H1 (cell line): ENCODE measurements at regions of chr11 and their contacts with region 1.

Region 1: DNA sequence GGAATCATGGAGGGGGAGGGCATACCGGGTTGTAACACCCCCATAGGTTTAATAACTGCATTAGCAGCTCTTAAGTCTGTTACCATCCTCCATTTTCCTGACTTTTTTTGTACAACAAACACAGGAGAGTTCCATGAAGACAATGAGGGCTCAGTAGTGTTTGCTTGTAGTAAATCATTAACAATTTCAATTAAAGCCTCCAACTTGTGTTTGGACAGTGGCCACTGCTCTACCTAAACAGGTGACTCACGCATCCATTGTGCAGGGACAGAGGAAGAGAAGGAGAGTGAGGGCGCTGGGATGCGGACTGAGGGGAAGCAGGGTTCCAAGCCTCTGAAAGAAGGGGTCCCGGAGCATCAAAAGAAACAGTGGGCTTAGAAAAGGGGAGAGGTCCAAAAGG is 21.3 kb upstream of the MTNR1B start:
- DNase-seq: no peak
- H3K4me3 ChIP-seq: no peak overlapping the region
- H3K27ac ChIP-seq: no peak overlapping the region
- H3K4me1 ChIP-seq: no peaks in the 10 kb centered on the region
- H3K27me3 ChIP-seq: no peaks in the 10 kb centered on the region
- CTCF ChIP-seq: no peak
- EP300 ChIP-seq: no peak
- POLR2A ChIP-seq: no peak
- RAD21 ChIP-seq: no peak

Region 2: GRCh38 chr11:92753151-92753550 is 195.0 kb before region 1 on chr11:
- CTCF ChIA-PET with region 1: no interaction called
- POLR2A ChIA-PET with region 1: no interaction called
- DNase-seq: no peak
- H3K4me3 ChIP-seq: no peak overlapping the region
- H3K27ac ChIP-seq: no peak overlapping the region
- H3K4me1 ChIP-seq: no peaks in the 10 kb centered on the region
- H3K27me3 ChIP-seq: no peaks in the 10 kb centered on the region
- CTCF ChIP-seq: no peak
- EP300 ChIP-seq: no peak
- POLR2A ChIP-seq: no peak
- RAD21 ChIP-seq: no peak

Region 3: GRCh38 chr11:92969634-92970347 is 21.7 kb after region 1 on chr11 and contains the start of gene MTNR1B:
- CTCF ChIA-PET with region 1: interaction called, 39 read pairs
- POLR2A ChIA-PET with region 1: no interaction called
- DNase-seq: peak in 1 of 2 experiments; percentile 62
- H3K4me3 ChIP-seq: peak within 1 kb of the TSS; percentile 35 to 72 (median 63)
- H3K27ac ChIP-seq: no peak within 1 kb of the TSS
- H3K4me1 ChIP-seq: peaks cover 0 to 2% (median 0%) of the 10 kb centered on the region in 4 experiments; a peak in 2 of 7 replicates
- H3K27me3 ChIP-seq: peaks cover 12 to 25% (median 18%) of the 10 kb centered on the region in 4 experiments
- CTCF ChIP-seq: no peak
- EP300 ChIP-seq: no peak
- POLR2A ChIP-seq: peak in 1 of 2 experiments; percentile 38; a peak in 1 of 3 replicates
- RAD21 ChIP-seq: no peak
- total RNA-seq, gene MTNR1B: not detected in 2 replicates

Region 4: DNA sequence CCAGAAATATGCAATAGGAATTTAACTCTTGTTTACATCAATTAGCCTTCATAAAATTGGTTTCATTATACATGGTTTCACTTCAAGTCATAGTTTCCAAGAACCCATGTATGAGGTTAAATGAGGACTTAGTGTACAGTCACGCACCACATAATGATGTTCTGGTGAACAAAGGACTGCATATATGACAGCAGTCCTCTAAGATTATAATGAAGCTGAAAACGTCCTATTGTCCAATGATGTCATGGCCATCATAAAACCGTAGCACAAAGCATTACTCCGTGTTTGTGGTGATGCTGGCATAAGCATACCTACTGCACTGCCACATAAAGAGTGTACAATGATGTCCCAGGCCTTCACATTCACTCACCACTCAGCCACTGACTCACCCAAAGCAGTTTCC is 564.0 kb after region 1 on chr11:
- CTCF ChIA-PET with region 1: no interaction called
- POLR2A ChIA-PET with region 1: no interaction called
- DNase-seq: no peak
- H3K4me3 ChIP-seq: no peak overlapping the region
- H3K27ac ChIP-seq: no peak overlapping the region
- H3K4me1 ChIP-seq: peaks cover 0 to 5% (median 0%) of the 10 kb centered on the region in 4 experiments; a peak in 4 of 7 replicates
- H3K27me3 ChIP-seq: no peaks in the 10 kb centered on the region
- CTCF ChIP-seq: no peak
- EP300 ChIP-seq: no peak
- POLR2A ChIP-seq: no peak
- RAD21 ChIP-seq: no peak